CD14-positive monocyte (primary cell): ENCODE measurements at regions of chr7 and their contacts with region 1.

Region 1: DNA sequence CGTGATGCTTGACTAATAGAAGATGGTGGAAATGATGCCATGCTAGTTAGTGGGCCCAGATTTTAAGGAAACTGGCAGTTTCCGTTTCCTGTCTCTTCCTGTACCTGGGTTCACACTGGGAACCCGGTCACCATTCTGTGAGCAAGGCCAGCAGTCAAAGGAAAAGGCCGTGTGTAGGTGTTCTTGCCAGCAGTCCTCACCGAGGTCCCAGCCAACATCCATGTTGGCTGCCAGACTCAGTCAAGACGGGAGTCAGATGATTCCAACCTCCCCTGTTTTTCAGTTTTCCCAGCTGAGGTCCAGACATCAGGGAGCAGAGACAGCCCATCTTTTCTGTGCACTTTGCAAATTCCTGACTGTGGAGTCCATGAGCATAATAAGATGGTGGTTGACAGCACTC is 15.2 kb upstream of the PILRB start:
- DNase-seq: no peak
- H3K4me3 ChIP-seq: no peak overlapping the region
- H3K4me3 Mint-ChIP-seq: no peak overlapping the region
- H3K27ac ChIP-seq: no peak overlapping the region
- H3K27ac Mint-ChIP-seq: peak overlapping the region in 2 of 7 donors; percentile 3 to 52
- H3K4me1 ChIP-seq: peaks cover 4 to 6% of the 10 kb centered on the region in 2 donors
- H3K4me1 Mint-ChIP-seq: peaks cover 12% of the 10 kb centered on the region
- H3K27me3 ChIP-seq: no peaks in the 10 kb centered on the region
- H3K27me3 Mint-ChIP-seq: peaks cover 0 to 3% (median 0%) of the 10 kb centered on the region in 3 donors
- CTCF ChIP-seq: no peak

Region 2: DNA sequence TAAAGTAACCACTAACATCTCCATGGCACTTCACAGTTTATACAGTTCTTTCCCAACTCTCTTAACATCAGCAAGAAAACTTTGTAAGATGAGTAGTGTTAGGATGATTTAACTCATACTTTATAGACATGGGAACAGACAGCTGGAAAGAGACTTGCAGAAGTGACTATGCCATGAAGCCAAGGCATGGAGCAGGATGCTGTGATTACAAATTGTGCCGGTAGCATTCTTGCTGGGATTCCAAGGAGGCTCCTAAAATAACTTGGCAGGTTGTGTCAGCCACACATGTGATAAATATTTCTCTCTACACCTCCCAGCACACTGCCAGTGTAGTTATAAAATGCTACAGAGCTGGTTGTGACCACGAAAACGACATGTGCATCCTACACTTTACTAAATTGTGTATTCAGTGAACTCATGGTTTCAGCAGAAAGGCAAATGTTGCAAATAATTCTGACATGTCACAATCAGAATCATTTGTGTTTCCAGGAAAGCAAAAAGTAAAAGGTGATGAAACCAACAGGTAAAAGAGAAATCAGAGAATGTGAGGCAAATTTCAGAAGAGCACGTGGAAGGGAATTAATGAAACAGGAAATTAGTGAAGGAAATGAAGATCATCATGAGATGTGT is 553.2 kb before region 1 on chr7:
- intact Hi-C with region 1: no loop called
- DNase-seq: no peak
- H3K4me3 ChIP-seq: no peak overlapping the region
- H3K4me3 Mint-ChIP-seq: no peak overlapping the region
- H3K27ac ChIP-seq: no peak overlapping the region
- H3K27ac Mint-ChIP-seq: no peak overlapping the region
- H3K4me1 ChIP-seq: no peaks in the 10 kb centered on the region
- H3K4me1 Mint-ChIP-seq: no peaks in the 10 kb centered on the region
- H3K27me3 ChIP-seq: peaks cover 0 to 3% of the 10 kb centered on the region in 2 donors
- H3K27me3 Mint-ChIP-seq: peaks cover 5 to 8% (median 8%) of the 10 kb centered on the region in 3 donors
- CTCF ChIP-seq: no peak

Region 3: DNA sequence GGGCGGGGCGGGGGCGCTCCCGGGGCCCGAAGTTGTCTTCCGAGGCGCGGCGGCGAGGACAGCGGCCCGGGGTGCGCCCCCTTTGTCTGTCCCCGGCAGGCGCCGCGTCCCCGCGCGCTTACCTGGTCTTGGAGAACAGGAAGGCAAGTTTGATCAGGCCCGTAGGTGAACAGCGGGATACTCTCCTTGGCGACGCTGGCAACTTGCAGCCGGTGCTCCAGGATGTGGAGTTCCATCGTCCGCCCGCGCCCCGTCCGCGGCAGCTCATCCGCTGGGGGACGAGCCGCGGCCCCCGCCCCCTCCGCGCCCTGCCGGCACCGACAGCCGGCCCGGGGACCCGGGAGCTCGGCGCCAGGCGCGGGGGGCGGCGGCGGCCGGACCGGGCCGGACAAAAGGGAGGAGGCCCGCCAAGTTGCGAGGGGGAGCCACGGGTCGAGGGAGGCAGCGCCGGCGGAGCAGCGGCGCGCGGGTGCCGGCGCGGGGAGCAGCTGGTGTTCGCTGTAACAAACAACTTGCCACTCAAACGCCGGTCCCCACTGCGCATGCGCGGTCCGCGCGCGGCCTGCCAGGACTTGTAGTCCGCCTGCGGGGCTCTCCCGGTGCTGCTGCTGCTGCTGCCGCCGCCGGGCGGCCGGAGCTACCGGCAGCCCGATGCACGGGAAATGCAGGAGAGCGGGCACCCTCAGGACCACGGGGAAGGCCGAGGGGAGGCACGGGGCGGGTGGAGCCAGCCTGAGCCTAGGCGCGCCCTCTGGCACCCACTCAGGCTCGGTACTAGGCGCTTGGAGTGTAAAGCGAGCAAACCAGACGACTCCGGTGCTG is 70.8 kb before region 1 on chr7:
- intact Hi-C with region 1: loop called (anchors 10 kb)
- DNase-seq: peak; percentile 93 to 97 (median 94)
- H3K4me3 ChIP-seq: peak overlapping the region; percentile 38 to 71 (median 57)
- H3K4me3 Mint-ChIP-seq: peak overlapping the region; percentile 75 to 82
- H3K27ac ChIP-seq: no peak overlapping the region
- H3K27ac Mint-ChIP-seq: peak overlapping the region in 1 of 7 donors; percentile 53
- H3K4me1 ChIP-seq: peaks cover 12 to 16% of the 10 kb centered on the region in 2 donors
- H3K4me1 Mint-ChIP-seq: peaks cover 25% of the 10 kb centered on the region
- H3K27me3 ChIP-seq: peaks cover 2 to 8% of the 10 kb centered on the region in 2 donors
- H3K27me3 Mint-ChIP-seq: peaks cover 13 to 25% (median 19%) of the 10 kb centered on the region in 3 donors
- CTCF ChIP-seq: no peak

Region 4: GRCh38 chr7:100400656-100401055 is 57.9 kb after region 1 on chr7:
- intact Hi-C with region 1: loop called in 1 of 2 experiments (anchors 5 kb)
- DNase-seq: no peak
- H3K4me3 ChIP-seq: no peak overlapping the region
- H3K4me3 Mint-ChIP-seq: no peak overlapping the region
- H3K27ac ChIP-seq: no peak overlapping the region
- H3K27ac Mint-ChIP-seq: peak overlapping the region in 2 of 7 donors; percentile 34 to 42
- H3K4me1 ChIP-seq: peaks cover 30 to 45% of the 10 kb centered on the region in 2 donors
- H3K4me1 Mint-ChIP-seq: peaks cover 56% of the 10 kb centered on the region
- H3K27me3 ChIP-seq: no peaks in the 10 kb centered on the region
- H3K27me3 Mint-ChIP-seq: peaks cover 0 to 2% (median 2%) of the 10 kb centered on the region in 3 donors
- CTCF ChIP-seq: no peak